ENCODE measurements at regions of chr2 and their contacts with region 1.

Region 1: GRCh38 chr2:85619617-85620016 is 3.6 kb downstream of the USP39 start:
- DNase-seq: no peak
- H3K4me3 Mint-ChIP-seq: no peak overlapping the region
- H3K27ac Mint-ChIP-seq: no peak overlapping the region
- H3K4me1 Mint-ChIP-seq: peaks cover 32% of the 10 kb centered on the region
- H3K27me3 Mint-ChIP-seq: no peaks in the 10 kb centered on the region

Region 2: GRCh38 chr2:85314884-85315242 is 304.8 kb before region 1 on chr2:
- CTCF ChIA-PET with region 1: no interaction called
- POLR2A ChIA-PET with region 1: no interaction called
- DNase-seq: no peak
- H3K4me3 Mint-ChIP-seq: no peak overlapping the region
- H3K27ac Mint-ChIP-seq: peak overlapping the region; percentile 9
- H3K4me1 Mint-ChIP-seq: peaks cover 34% of the 10 kb centered on the region
- H3K27me3 Mint-ChIP-seq: no peaks in the 10 kb centered on the region

Region 3: GRCh38 chr2:85354286-85355072 is 265.1 kb before region 1 on chr2 and contains the starts of genes ELMOD3 and RETSAT:
- CTCF ChIA-PET with region 1: no interaction called
- POLR2A ChIA-PET with region 1: no interaction called
- DNase-seq: peak; percentile 100
- H3K4me3 Mint-ChIP-seq: peak within 1 kb of the TSS; percentile 96
- H3K27ac Mint-ChIP-seq: peak within 1 kb of the TSS; percentile 96
- H3K4me1 Mint-ChIP-seq: peaks cover 46% of the 10 kb centered on the region
- H3K27me3 Mint-ChIP-seq: no peaks in the 10 kb centered on the region
- total RNA-seq, gene ELMOD3: 19.4 to 22.1 TPM
- total RNA-seq, gene RETSAT: 24.7 to 24.9 TPM

Region 4: DNA sequence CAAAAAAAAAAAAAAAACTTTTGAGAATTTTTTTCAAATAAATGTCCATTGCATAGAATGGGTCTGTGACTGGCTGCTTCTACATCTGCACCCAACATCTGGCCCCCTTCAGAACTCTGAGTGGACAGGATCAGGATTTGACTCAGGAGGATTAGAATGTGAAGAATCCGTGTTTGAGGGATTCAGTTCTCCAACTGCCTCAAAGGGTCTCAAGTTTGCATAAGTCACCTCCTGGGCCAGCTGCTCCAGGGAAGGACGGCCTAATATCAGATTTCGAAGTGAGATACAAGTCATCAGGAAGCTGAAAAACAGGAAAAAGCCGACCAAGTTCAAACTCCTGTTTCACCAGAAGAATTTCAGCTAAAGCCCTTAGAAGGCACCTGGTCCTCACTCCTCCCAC is 69.8 kb before region 1 on chr2:
- CTCF ChIA-PET with region 1: no interaction called
- POLR2A ChIA-PET with region 1: no interaction called
- DNase-seq: no peak
- H3K4me3 Mint-ChIP-seq: no peak overlapping the region
- H3K27ac Mint-ChIP-seq: peak overlapping the region; percentile 19
- H3K4me1 Mint-ChIP-seq: peaks cover 5% of the 10 kb centered on the region
- H3K27me3 Mint-ChIP-seq: no peaks in the 10 kb centered on the region

Region 5: DNA sequence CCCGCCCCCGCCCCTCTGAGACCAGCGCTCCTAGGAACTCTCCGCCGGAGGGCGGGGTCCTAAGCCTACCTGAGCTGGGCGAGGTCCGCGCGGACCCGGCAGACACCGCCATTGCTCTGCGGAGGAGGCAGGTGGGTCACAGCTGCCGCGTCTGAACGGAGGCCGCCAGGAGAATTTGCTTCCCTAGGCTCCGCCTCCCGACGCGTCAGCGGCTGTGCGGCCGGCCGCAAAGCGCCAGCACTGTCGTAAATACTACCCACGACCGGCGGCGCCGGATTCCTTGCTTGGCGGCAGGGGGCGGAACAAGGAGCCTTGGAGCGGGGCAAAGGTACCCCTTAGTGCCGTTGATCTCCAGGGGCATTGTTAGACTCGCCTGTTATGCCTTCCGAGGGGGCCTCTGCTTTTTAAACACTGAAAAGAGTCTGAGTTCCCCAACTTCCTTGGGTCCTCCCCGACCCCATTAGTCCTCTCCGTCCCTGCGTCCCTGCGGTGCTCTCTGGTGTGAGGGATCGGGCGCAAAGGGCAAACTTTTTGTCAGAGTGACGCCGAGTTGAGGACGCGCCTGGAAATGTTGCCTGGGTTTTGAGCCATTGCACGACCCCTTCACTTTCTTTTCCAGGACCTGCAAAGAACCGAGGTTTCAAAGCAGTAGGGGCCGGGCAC is 58.2 kb before region 1 on chr2 and contains the start of gene GGCX:
- CTCF ChIA-PET with region 1: no interaction called
- POLR2A ChIA-PET with region 1: interaction called, 10 read pairs
- DNase-seq: peak; percentile 95
- H3K4me3 Mint-ChIP-seq: peak within 1 kb of the TSS; percentile 98
- H3K27ac Mint-ChIP-seq: peak within 1 kb of the TSS; percentile 99
- H3K4me1 Mint-ChIP-seq: peaks cover 36% of the 10 kb centered on the region
- H3K27me3 Mint-ChIP-seq: no peaks in the 10 kb centered on the region
- total RNA-seq, gene GGCX: 20.8 to 22.8 TPM

Region 6: GRCh38 chr2:85694052-85695025 is 74.7 kb after region 1 on chr2 and contains the start of gene GNLY:
- CTCF ChIA-PET with region 1: no interaction called
- POLR2A ChIA-PET with region 1: no interaction called
- DNase-seq: no peak
- H3K4me3 Mint-ChIP-seq: peak within 1 kb of the TSS; percentile 34
- H3K27ac Mint-ChIP-seq: peak within 1 kb of the TSS; percentile 76
- H3K4me1 Mint-ChIP-seq: peaks cover 11% of the 10 kb centered on the region
- H3K27me3 Mint-ChIP-seq: peaks cover 3% of the 10 kb centered on the region
- total RNA-seq, gene GNLY: 72.9 to 75.5 TPM

Measured in activated CD4-positive, alpha-beta T cell treated with anti-CD3 and anti-CD28 coated beads, Interleukin-2, amount 10 ng/mL, durations not matched to agents 7 days and 5 days (primary cell).